Naive thymus-derived CD4-positive, alpha-beta T cell (primary cell): ENCODE measurements at regions of chrX and their contacts with region 1.

Region 1: GRCh38 chrX:109485470-109486340 is 3.8 kb upstream of the GUCY2F start:
- DNase-seq: peak; percentile 7 to 70 (median 50)
- ATAC-seq: peak; percentile 92
- H3K4me3 ChIP-seq: no peak overlapping the region
- H3K4me3 Mint-ChIP-seq: no peak overlapping the region
- H3K27ac ChIP-seq: no peak overlapping the region
- H3K27ac Mint-ChIP-seq: no peak overlapping the region
- H3K4me1 ChIP-seq: no peaks in the 10 kb centered on the region
- H3K4me1 Mint-ChIP-seq: peaks cover 0 to 2% (median 0%) of the 10 kb centered on the region in 7 donors
- H3K27me3 ChIP-seq: no peaks in the 10 kb centered on the region
- H3K27me3 Mint-ChIP-seq: peaks cover 0 to 14% (median 0%) of the 10 kb centered on the region in 5 donors

Region 2: DNA sequence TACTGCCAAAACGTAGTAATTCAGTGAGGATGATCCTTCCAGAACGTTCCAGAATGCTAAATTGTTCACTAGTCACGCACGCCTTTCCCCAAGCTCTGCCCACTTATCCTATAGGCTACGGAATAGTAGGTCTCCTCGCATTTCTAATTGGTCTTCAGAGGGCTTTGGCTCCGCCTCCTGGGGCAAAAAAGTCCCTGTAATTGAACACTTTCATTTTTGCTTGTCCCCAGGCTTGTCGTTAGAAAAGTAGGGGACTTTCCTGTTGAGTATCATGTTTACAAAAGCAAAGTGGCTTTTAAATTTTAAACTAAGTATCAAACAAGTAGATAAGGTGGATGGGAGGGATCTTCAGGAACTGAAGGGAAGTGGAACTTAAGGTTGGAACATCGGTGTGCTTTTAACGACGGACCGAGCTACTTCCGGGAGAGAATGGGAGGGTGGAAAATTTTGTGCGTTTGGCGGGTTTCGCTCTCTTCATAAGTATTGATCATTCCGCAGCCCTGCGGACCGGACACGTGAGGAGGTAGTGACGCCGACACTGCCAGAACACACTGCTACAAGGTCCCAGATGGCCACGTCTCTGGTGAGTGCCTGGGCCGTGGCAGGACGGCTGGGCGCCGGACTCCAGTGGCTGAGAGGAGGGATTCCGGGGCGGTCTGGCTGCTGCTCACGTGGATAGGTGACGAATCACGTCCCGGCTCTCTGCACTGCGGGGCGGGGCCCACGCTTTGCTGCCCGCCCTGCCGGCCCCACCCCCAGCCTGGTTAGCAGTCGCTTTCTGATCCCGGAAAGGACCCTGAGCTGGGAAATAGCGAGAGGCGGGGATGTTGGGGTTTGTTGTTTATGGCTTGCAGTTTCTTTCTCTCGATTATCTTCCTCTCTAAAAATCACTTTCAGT is 51.0 kb after region 1 on chrX and contains the start of gene NXT2:
- CTCF ChIA-PET with region 1: no interaction called
- POLR2A ChIA-PET with region 1: no interaction called
- intact Hi-C with region 1: loop called (anchors 1 to 2 kb)
- DNase-seq: peak; percentile 64 to 89 (median 83)
- ATAC-seq: peak; percentile 100
- H3K4me3 ChIP-seq: peak within 1 kb of the TSS; percentile 87
- H3K4me3 Mint-ChIP-seq: peak within 1 kb of the TSS; percentile 79 to 98 (median 95)
- H3K27ac ChIP-seq: peak within 1 kb of the TSS; percentile 87
- H3K27ac Mint-ChIP-seq: peak within 1 kb of the TSS; percentile 92 to 99 (median 98)
- H3K4me1 ChIP-seq: peaks cover 0 to 3% of the 10 kb centered on the region in 2 donors
- H3K4me1 Mint-ChIP-seq: peaks cover 0 to 14% (median 8%) of the 10 kb centered on the region in 7 donors
- H3K27me3 ChIP-seq: no peaks in the 10 kb centered on the region
- H3K27me3 Mint-ChIP-seq: peaks cover 0 to 19% (median 12%) of the 10 kb centered on the region in 5 donors
- total RNA-seq, gene NXT2: 5.7 to 13.5 (median 7.7) TPM

Region 3: GRCh38 chrX:109578916-109579315 is 93.2 kb after region 1 on chrX:
- CTCF ChIA-PET with region 1: no interaction called
- POLR2A ChIA-PET with region 1: no interaction called
- intact Hi-C with region 1: no loop called
- DNase-seq: no peak
- ATAC-seq: no peak
- H3K4me3 ChIP-seq: no peak overlapping the region
- H3K4me3 Mint-ChIP-seq: no peak overlapping the region
- H3K27ac ChIP-seq: no peak overlapping the region
- H3K27ac Mint-ChIP-seq: no peak overlapping the region
- H3K4me1 ChIP-seq: no peaks in the 10 kb centered on the region
- H3K4me1 Mint-ChIP-seq: no peaks in the 10 kb centered on the region
- H3K27me3 ChIP-seq: no peaks in the 10 kb centered on the region
- H3K27me3 Mint-ChIP-seq: peaks cover 0 to 5% (median 0%) of the 10 kb centered on the region in 5 donors

Region 4: DNA sequence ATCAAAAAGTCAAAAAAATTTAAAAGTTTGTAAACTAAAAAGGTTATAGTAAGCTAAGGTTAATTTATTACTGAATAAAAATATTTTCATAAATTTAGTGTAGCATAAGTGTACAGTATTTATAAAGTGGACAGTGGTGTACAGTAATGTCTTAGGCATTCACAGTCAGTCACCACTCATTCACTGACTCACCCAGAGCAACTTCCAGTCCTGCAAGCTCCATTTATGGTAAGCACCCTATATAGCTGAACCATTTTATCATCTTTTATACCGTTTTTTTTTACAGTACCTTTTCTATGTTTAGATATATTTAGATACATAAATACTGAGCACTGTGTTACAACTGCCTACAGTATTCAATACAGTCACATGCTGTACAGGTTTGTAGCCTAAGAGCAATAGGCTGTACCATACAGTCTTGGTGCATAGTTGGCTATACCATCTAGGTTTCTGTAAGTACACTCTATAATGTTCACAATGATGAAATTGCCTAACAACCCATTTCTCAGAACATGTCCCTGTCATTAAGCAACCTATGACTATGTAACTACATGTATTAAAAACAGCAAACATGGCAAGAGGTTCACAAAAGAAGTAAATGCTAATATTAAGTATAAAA is 228.7 kb after region 1 on chrX:
- CTCF ChIA-PET with region 1: no interaction called
- POLR2A ChIA-PET with region 1: no interaction called
- intact Hi-C with region 1: loop called in 1 of 2 experiments (anchors 5 kb)
- DNase-seq: no peak
- ATAC-seq: no peak
- H3K4me3 ChIP-seq: no peak overlapping the region
- H3K4me3 Mint-ChIP-seq: no peak overlapping the region
- H3K27ac ChIP-seq: no peak overlapping the region
- H3K27ac Mint-ChIP-seq: no peak overlapping the region
- H3K4me1 ChIP-seq: no peaks in the 10 kb centered on the region
- H3K4me1 Mint-ChIP-seq: peaks cover 6 to 46% (median 28%) of the 10 kb centered on the region in 7 donors
- H3K27me3 ChIP-seq: no peaks in the 10 kb centered on the region
- H3K27me3 Mint-ChIP-seq: no peaks in the 10 kb centered on the region

Region 5: DNA sequence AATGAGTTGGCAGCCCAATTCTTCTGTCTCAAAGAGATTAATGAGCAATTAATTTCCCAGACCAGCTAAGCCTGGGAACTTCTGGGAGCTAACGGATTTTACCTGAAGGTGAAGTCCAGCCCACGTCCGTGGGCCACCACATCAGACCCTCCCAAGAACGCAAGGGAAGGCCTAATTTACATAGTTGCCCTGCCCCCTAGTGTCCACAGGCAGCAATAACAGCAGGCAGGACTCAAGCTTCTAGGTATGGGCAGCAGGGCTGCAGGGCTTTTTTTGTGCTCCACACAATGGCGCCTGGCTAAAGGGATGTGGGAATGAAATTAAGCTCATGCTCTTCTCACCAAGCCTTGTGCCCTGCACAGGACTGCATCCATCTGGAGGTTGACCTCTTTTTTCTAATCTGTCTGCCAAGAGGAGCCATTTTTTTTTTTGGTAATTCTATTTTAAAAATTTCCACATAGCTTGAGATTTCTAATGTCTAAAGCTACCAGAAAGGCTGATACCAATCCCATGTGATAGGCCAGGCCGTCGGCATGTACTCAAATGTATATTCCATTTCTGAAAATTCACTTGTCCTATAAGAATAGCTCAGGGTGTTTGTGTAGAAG is 405.3 kb after region 1 on chrX:
- CTCF ChIA-PET with region 1: no interaction called
- POLR2A ChIA-PET with region 1: no interaction called
- intact Hi-C with region 1: loop called (anchors 1 to 5 kb)
- DNase-seq: peak in 8 of 9 donors; percentile 11 to 48 (median 40)
- ATAC-seq: peak; percentile 74
- H3K4me3 ChIP-seq: no peak overlapping the region
- H3K4me3 Mint-ChIP-seq: no peak overlapping the region
- H3K27ac ChIP-seq: no peak overlapping the region
- H3K27ac Mint-ChIP-seq: no peak overlapping the region
- H3K4me1 ChIP-seq: no peaks in the 10 kb centered on the region
- H3K4me1 Mint-ChIP-seq: peaks cover 0 to 1% (median 0%) of the 10 kb centered on the region in 7 donors
- H3K27me3 ChIP-seq: no peaks in the 10 kb centered on the region
- H3K27me3 Mint-ChIP-seq: peaks cover 0 to 6% (median 0%) of the 10 kb centered on the region in 5 donors

Region 6: DNA sequence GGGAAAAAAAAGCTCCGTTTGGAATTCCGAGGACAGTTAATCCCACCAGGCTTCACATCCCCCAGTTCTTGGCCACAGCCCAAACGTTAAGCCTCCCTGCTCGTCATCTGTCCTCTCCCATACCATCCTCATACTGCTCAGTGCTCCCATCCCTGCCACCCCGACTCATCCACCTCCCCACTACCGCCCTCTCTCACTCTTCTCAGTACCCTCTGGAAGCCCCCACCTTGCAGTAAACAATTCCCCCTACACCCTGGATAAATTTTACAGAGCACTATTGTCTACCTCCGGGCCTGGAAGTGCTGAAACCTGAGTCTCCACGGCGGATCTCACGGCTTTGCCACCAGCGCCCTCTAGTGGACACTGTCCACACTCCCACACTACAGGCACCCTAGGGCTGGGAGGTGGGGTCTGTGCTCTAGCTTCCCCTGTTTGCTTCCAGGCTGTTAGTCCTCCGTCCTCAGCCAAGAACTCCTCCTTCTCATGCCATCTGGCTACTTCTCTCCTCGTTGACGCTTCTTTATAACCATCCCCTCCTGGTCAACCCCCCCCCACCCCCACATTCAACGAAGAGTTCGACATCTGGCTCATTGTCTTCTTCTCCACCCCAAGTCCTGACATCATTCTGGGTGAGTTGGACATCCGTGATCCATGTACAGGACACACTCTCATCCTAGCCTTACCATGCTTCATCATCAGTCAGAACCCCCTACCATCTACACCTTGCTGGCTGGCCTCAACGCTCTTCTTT is 927.4 kb after region 1 on chrX:
- CTCF ChIA-PET with region 1: no interaction called
- POLR2A ChIA-PET with region 1: no interaction called
- intact Hi-C with region 1: loop called in 1 of 2 experiments (anchors 5 kb)
- DNase-seq: peak; percentile 25 to 66 (median 56)
- ATAC-seq: peak; percentile 91
- H3K4me3 ChIP-seq: no peak overlapping the region
- H3K4me3 Mint-ChIP-seq: no peak overlapping the region
- H3K27ac ChIP-seq: no peak overlapping the region
- H3K27ac Mint-ChIP-seq: peak overlapping the region in 1 of 9 donors; percentile 16
- H3K4me1 ChIP-seq: no peaks in the 10 kb centered on the region
- H3K4me1 Mint-ChIP-seq: peaks cover 0 to 6% (median 0%) of the 10 kb centered on the region in 7 donors
- H3K27me3 ChIP-seq: no peaks in the 10 kb centered on the region
- H3K27me3 Mint-ChIP-seq: peaks cover 0 to 4% (median 0%) of the 10 kb centered on the region in 5 donors